ENCODE measurements at regions of chr1 and their contacts with region 1.

Region 1: DNA sequence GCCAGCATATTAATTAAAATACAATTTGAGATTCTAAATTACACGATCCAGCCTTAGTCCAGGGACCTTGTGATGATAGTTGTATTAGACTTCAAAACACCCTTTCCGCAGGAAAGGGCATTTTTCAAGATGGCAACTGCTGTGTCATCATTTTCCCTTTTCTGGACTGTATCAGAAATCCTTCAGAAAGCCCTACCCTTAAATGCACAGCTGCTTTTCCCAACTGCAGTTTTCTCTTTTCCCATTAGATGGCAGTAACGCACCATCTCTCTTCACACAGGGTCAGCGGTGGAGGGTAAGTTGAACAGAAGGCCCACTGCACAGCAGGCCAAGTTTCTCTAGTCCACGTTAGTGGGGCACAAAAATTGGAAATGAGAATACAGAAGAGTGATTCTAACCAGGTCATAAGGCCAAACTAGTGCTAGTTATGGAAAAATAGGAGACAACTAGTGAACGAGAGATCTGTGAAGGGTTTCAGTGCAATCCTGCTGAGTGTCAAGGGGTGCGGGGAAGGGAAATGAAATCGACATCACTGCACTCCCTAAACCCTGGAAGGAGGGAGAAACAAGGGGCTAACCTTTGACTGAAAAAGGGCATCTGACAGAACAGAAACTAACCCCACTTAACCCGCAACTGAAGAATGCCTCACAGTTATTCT is 22.1 kb upstream of the TDRD10 start:
- DNase-seq: peak; percentile 86 to 93
- ATAC-seq: peak; percentile 95 to 99
- H3K4me3 ChIP-seq: no peak overlapping the region
- H3K27ac ChIP-seq: peak overlapping the region; percentile 48 to 67; a peak in 3 of 6 replicates
- H3K4me1 ChIP-seq: peaks cover 9% of the 10 kb centered on the region; the same call in 2 of the 3 replicates
- CTCF ChIP-seq: peak; percentile 94
- EP300 ChIP-seq: no peak
- POLR2A ChIP-seq: no peak
- RAD21 ChIP-seq: peak; percentile 95 to 97

Region 2: DNA sequence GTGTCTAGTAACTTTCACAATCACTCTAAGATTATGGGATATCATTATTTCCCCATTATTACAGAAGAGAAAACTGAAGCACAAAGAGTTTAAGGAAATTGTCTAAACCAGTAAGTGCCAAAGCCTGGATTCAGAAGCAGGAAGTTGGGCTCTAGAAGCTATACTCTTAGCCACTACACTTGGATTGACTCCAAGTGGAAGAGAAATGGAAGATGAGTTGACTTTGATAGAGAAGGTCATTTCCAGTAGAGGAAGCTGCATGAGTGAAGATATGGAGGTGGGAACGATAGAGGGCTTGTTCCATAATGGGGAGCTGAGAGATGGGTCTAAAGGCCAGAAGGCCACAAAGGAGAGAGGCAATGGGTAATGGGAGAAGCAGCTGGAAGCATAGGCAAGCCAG is 10.4 kb after region 1 on chr1:
- CTCF ChIA-PET with region 1: interaction called, 34 read pairs
- POLR2A ChIA-PET with region 1: no interaction called
- DNase-seq: no peak
- ATAC-seq: no peak
- H3K4me3 ChIP-seq: no peak overlapping the region
- H3K27ac ChIP-seq: no peak overlapping the region
- H3K4me1 ChIP-seq: no peaks in the 10 kb centered on the region
- CTCF ChIP-seq: no peak
- EP300 ChIP-seq: no peak
- POLR2A ChIP-seq: no peak
- RAD21 ChIP-seq: no peak

Region 3: GRCh38 chr1:154539507-154540483 is 59.9 kb after region 1 on chr1:
- CTCF ChIA-PET with region 1: interaction called, 79 read pairs
- POLR2A ChIA-PET with region 1: no interaction called
- DNase-seq: no peak
- ATAC-seq: no peak
- H3K4me3 ChIP-seq: no peak overlapping the region
- H3K27ac ChIP-seq: no peak overlapping the region
- H3K4me1 ChIP-seq: no peaks in the 10 kb centered on the region
- CTCF ChIP-seq: no peak
- EP300 ChIP-seq: no peak
- POLR2A ChIP-seq: no peak
- RAD21 ChIP-seq: no peak

Region 4: GRCh38 chr1:154553056-154554030 is 73.5 kb after region 1 on chr1:
- CTCF ChIA-PET with region 1: interaction called, 79 read pairs
- POLR2A ChIA-PET with region 1: no interaction called
- DNase-seq: no peak
- ATAC-seq: no peak
- H3K4me3 ChIP-seq: no peak overlapping the region
- H3K27ac ChIP-seq: no peak overlapping the region
- H3K4me1 ChIP-seq: peaks cover 25% of the 10 kb centered on the region
- CTCF ChIP-seq: no peak
- EP300 ChIP-seq: no peak
- POLR2A ChIP-seq: no peak
- RAD21 ChIP-seq: no peak

Region 5: GRCh38 chr1:155078469-155079209 is 598.7 kb after region 1 on chr1 and contains the start of gene EFNA3:
- CTCF ChIA-PET with region 1: no interaction called
- POLR2A ChIA-PET with region 1: no interaction called
- DNase-seq: peak; percentile 50 to 77
- ATAC-seq: peak; percentile 9 to 41; a peak in 4 of 6 replicates
- H3K4me3 ChIP-seq: peak within 1 kb of the TSS; percentile 55
- H3K27ac ChIP-seq: peak within 1 kb of the TSS; percentile 50 to 78; a peak in 5 of 6 replicates
- H3K4me1 ChIP-seq: peaks cover 44% of the 10 kb centered on the region
- CTCF ChIP-seq: no peak
- EP300 ChIP-seq: no peak
- POLR2A ChIP-seq: no peak
- RAD21 ChIP-seq: no peak
- polyA plus RNA-seq, gene EFNA3: 1.9 and 2.6 TPM in 2 replicates

Measured in A549 (cell line).